ENCODE measurements at regions of chr2 and their contacts with region 1.

Region 1: GRCh38 chr2:86783615-86784339 is 6.9 kb downstream of the CD8A start:
- DNase-seq: no peak
- ATAC-seq: no peak
- H3K4me3 ChIP-seq: no peak overlapping the region
- H3K27ac ChIP-seq: no peak overlapping the region
- H3K4me1 ChIP-seq: peaks cover 2 to 25% (median 18%) of the 10 kb centered on the region in 9 donors
- H3K27me3 ChIP-seq: peaks cover 0 to 15% (median 1%) of the 10 kb centered on the region in 7 donors
- CTCF ChIP-seq: no peak

Region 2: DNA sequence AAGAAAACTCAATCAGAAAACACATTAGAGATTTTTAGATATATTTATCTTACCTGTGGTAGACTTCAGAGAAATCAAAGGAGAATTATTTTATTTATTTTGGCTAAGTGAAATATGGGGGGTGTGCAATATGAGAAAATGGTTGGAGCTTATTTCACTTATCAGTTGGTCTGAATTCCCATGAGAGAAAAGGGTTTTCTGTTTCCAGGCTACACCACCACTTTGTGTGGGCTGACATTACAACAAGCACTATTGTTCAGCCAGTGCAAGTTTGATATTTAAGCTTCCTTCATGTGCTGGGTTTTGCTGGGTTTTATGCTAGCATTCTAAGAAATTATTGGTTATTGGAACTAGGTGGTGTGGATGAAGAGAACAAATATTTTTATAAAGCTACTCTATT is 30.2 kb before region 1 on chr2:
- intact Hi-C with region 1: loop called in 1 of 10 experiments (anchors 2 kb)
- DNase-seq: no peak
- ATAC-seq: no peak
- H3K4me3 ChIP-seq: no peak overlapping the region
- H3K27ac ChIP-seq: no peak overlapping the region
- H3K4me1 ChIP-seq: peaks cover under 1 to 40% (median 15%) of the 10 kb centered on the region in 9 donors
- H3K27me3 ChIP-seq: no peaks in the 10 kb centered on the region
- CTCF ChIP-seq: no peak

Region 3: GRCh38 chr2:86764661-86765307 is 19.0 kb before region 1 on chr2:
- intact Hi-C with region 1: no loop called
- DNase-seq: no peak
- ATAC-seq: peak in 4 of 8 donors; percentile 38 to 63 (median 52)
- H3K4me3 ChIP-seq: no peak overlapping the region
- H3K27ac ChIP-seq: no peak overlapping the region
- H3K4me1 ChIP-seq: peaks cover 9 to 57% (median 25%) of the 10 kb centered on the region in 9 donors
- H3K27me3 ChIP-seq: no peaks in the 10 kb centered on the region
- CTCF ChIP-seq: peak; percentile 55 to 82 (median 69)

Region 4: GRCh38 chr2:88055371-88056128 is 1271.8 kb after region 1 on chr2 and contains the start of gene KRCC1:
- intact Hi-C with region 1: loop called in 1 of 10 experiments (anchors 10 kb)
- DNase-seq: peak; percentile 95 to 97
- ATAC-seq: peak; percentile 98 to 99 (median 99)
- H3K4me3 ChIP-seq: peak within 1 kb of the TSS; percentile 70 to 95 (median 86)
- H3K27ac ChIP-seq: peak within 1 kb of the TSS; percentile 90 to 100 (median 98)
- H3K4me1 ChIP-seq: peaks cover 0 to 45% (median 40%) of the 10 kb centered on the region in 9 donors
- H3K27me3 ChIP-seq: no peaks in the 10 kb centered on the region
- CTCF ChIP-seq: peak in 1 of 9 donors; percentile 36
- total RNA-seq, gene KRCC1: 20.1 to 26.7 (median 22.0) TPM

Measured in heart right ventricle (tissue), 16 donors.